GM23248 (cell line): ENCODE measurements at regions of chr2 and their contacts with region 1.

Region 1: GRCh38 chr2:178914259-178914849 is 107.1 kb upstream of the TTN start:
- DNase-seq: peak; percentile 84
- H3K4me3 ChIP-seq: no peak overlapping the region
- H3K27ac ChIP-seq: no peak overlapping the region
- H3K4me1 ChIP-seq: no peaks in the 10 kb centered on the region
- H3K27me3 ChIP-seq: peaks cover 4% of the 10 kb centered on the region; the same call in 1 of the 2 replicates

Region 2: DNA sequence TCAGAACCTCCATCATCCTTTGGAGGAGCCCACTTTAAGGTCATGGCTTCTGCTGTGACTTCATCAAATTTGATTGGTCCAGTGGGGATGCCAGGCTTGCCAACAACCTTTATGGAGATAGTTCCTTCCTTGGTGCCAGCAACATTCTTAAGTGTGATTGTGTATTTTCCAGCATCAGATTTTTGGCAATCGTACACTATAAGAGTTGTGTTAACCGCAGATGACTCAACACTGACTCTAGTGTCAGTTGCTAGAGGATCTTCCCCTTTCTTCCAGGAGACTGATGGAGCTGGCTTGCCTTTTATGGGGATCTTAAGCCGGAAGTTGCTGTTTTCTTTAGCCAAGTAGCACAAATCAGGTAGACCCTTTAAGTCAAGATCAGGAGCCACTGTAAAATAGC is 335.3 kb before region 1 on chr2:
- in situ Hi-C with region 1: no loop called
- DNase-seq: peak; percentile 30
- H3K4me3 ChIP-seq: no peak overlapping the region
- H3K27ac ChIP-seq: no peak overlapping the region
- H3K4me1 ChIP-seq: peaks cover 5% of the 10 kb centered on the region
- H3K27me3 ChIP-seq: no peaks in the 10 kb centered on the region

Region 3: GRCh38 chr2:178796079-178796677 is 118.2 kb before region 1 on chr2:
- in situ Hi-C with region 1: loop called (anchors 10 kb)
- DNase-seq: peak; percentile 67
- H3K4me3 ChIP-seq: no peak overlapping the region
- H3K27ac ChIP-seq: no peak overlapping the region
- H3K4me1 ChIP-seq: no peaks in the 10 kb centered on the region
- H3K27me3 ChIP-seq: no peaks in the 10 kb centered on the region